Common myeloid progenitor, CD34-positive (primary cell): ENCODE measurements at regions of chr14 and their contacts with region 1.

Region 1: GRCh38 chr14:73295198-73295796 is 58.0 kb downstream of the PAPLN start:
- DNase-seq: peak; percentile 58 to 78 (median 67)
- H3K4me3 ChIP-seq: no peak overlapping the region
- H3K27ac ChIP-seq: no peak overlapping the region
- H3K4me1 ChIP-seq: no peaks in the 10 kb centered on the region
- H3K27me3 ChIP-seq: no peaks in the 10 kb centered on the region

Region 2: GRCh38 chr14:73311708-73312030 is 16.4 kb after region 1 on chr14:
- CTCF ChIA-PET with region 1: interaction called, 11 read pairs
- POLR2A ChIA-PET with region 1: no interaction called
- DNase-seq: peak in 1 of 3 donors; percentile 78
- H3K4me3 ChIP-seq: peak overlapping the region in 3 of 7 experiments; percentile 28 to 39 (median 34)
- H3K27ac ChIP-seq: peak overlapping the region in 1 of 2 experiments; percentile 61
- H3K4me1 ChIP-seq: peaks cover 8 to 23% (median 19%) of the 10 kb centered on the region in 4 experiments
- H3K27me3 ChIP-seq: peaks cover 0 to 1% (median 0%) of the 10 kb centered on the region in 5 experiments

Region 3: DNA sequence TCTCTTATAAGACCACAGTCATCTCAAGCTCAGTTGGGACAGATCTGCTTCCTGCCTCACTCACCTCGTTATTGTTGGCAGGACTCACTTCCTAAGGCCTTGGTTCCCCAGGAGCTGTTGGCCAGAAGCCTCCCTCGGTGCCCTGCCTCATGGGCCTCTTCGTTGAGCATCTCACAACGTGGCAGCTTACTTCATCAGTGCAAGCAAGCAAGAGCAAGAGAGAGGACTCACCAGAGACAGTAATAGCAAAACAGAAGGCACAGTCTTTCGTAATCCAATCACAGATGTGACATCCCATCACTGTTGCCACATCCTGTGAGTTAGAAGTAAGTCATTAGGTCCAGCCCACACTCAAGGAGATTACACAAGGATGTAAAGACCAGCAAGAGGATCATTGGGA is 168.1 kb after region 1 on chr14:
- CTCF ChIA-PET with region 1: interaction called, 13 read pairs
- POLR2A ChIA-PET with region 1: no interaction called
- DNase-seq: peak in 2 of 3 donors; percentile 77 to 78
- H3K4me3 ChIP-seq: peak overlapping the region in 1 of 7 experiments; percentile 66
- H3K27ac ChIP-seq: no peak overlapping the region
- H3K4me1 ChIP-seq: peaks cover 20 to 68% (median 47%) of the 10 kb centered on the region in 4 experiments
- H3K27me3 ChIP-seq: no peaks in the 10 kb centered on the region

Region 4: GRCh38 chr14:73472185-73473114 is 177.2 kb after region 1 on chr14:
- CTCF ChIA-PET with region 1: interaction called, 62 read pairs
- POLR2A ChIA-PET with region 1: interaction called, 5 read pairs
- DNase-seq: peak; percentile 75 to 88 (median 86)
- H3K4me3 ChIP-seq: no peak overlapping the region
- H3K27ac ChIP-seq: no peak overlapping the region
- H3K4me1 ChIP-seq: peaks cover 0 to 2% (median 0%) of the 10 kb centered on the region in 4 experiments
- H3K27me3 ChIP-seq: peaks cover 0 to 2% (median 0%) of the 10 kb centered on the region in 5 experiments

Region 5: DNA sequence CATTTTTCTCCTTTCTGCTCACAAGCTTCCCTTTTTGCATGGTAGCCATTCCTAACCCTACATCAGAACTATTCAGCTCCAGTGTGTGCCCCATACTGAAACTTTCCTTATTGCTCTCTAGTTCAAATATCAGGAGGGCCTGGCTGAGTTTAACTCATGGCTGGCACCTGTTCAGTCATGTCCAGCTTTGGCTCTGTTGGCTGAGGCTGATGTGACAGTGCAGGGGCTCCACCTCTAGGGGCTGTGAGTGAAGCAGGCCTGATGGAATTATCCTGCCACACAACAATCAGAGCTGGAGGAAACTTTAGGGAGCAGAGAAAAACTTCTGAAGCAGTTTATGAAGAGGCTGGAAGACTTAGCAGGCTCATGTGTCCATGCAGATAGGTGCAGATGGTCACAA is 663.3 kb after region 1 on chr14:
- CTCF ChIA-PET with region 1: no interaction called
- POLR2A ChIA-PET with region 1: no interaction called
- DNase-seq: no peak
- H3K4me3 ChIP-seq: no peak overlapping the region
- H3K27ac ChIP-seq: no peak overlapping the region
- H3K4me1 ChIP-seq: no peaks in the 10 kb centered on the region
- H3K27me3 ChIP-seq: no peaks in the 10 kb centered on the region